Activated T-helper 1 cell treated with anti-CD3 and anti-CD28 coated beads, Interleukin-12 subunit alpha, Interleukin-12 subunit beta, Interleukin-2, Interleukin-4 antibody, amounts not matched to agents 30 ng/mL and 10 ng/mL and 1 ng/mL, durations not matched to agents 14 hours and 24 hours and 36 hours (primary cell): ENCODE measurements at regions of chrX and their contacts with region 1.

Region 1: DNA sequence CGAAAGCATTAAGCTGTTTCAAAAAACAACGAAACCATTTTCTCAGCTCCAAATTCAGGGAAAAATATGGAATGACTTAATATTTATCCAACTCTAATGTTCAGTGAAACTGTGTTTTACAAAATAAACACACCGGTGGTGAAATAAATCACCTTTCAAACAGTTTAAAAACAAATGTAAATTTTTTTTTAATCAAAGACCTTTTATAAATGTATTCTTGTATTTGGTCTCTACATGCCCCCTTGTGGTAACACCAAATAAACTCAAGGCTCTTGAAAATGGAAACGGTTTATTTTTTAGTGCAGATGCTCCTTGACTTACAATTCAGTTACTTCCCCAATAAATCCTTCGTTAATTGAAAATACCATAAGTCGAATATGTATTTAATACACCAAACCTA is 45.8 kb upstream of the ITM2A start:
- DNase-seq: no peak
- H3K4me3 Mint-ChIP-seq: peak overlapping the region; percentile 71
- H3K27ac Mint-ChIP-seq: peak overlapping the region; percentile 34
- H3K4me1 Mint-ChIP-seq: peaks cover 28% of the 10 kb centered on the region
- H3K27me3 Mint-ChIP-seq: no peaks in the 10 kb centered on the region

Region 2: DNA sequence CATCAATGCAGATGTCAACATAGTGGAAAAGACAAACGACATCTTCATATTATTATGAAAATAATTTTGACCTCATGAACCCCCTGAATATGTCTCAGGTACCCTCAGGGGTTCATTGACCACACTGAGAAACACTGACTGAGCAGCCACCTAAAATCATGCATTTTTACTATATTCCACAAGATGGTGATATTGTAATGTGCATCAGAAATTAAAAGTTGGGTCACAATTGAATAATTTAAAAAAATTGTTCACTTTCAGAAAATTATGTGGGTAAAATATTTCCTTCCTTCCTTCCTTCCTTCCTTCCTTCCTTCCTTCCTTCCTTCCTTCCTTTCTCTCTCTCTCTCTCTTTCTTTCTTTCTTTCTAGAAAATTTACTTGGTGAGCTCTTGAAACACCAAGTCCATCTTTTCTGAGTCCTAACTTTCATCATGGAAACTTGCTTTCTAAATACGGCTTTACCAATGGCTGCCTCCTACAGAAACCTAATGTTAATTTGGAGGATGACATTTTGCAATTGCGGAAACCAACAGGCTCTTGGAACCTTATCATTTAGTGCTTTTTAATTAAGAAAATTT is 857.5 kb before region 1 on chrX:
- intact Hi-C with region 1: loop called (anchors 1 kb)
- DNase-seq: no peak
- H3K4me3 Mint-ChIP-seq: no peak overlapping the region
- H3K27ac Mint-ChIP-seq: peak overlapping the region; percentile 61
- H3K4me1 Mint-ChIP-seq: peaks cover 5% of the 10 kb centered on the region
- H3K27me3 Mint-ChIP-seq: no peaks in the 10 kb centered on the region

Region 3: DNA sequence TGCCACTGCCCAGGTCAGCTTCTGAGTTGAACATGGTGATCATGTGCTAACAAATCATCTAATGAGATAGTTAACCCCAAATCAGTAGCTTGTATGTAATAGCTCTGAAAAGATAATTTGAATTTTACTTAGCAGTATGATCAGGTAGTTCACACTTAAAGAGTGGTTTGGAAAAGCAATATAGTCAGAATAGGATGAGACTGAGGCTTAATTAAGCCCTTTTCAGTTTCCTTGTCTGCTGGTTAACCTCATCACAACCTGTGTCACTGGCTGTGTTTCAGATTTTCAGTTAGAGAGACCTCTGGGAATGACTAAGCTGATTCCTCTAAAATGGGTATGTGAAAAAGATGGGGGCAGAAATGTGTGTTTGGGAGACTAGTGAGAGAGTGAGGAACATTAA is 230.4 kb before region 1 on chrX:
- intact Hi-C with region 1: loop called (anchors 5 kb)
- DNase-seq: no peak
- H3K4me3 Mint-ChIP-seq: peak overlapping the region; percentile 72
- H3K27ac Mint-ChIP-seq: peak overlapping the region; percentile 81
- H3K4me1 Mint-ChIP-seq: peaks cover 52% of the 10 kb centered on the region
- H3K27me3 Mint-ChIP-seq: no peaks in the 10 kb centered on the region

Region 4: GRCh38 chrX:79325263-79325958 is 87.6 kb before region 1 on chrX:
- intact Hi-C with region 1: loop called (anchors 5 kb)
- DNase-seq: peak; percentile 24
- H3K4me3 Mint-ChIP-seq: peak overlapping the region; percentile 73
- H3K27ac Mint-ChIP-seq: peak overlapping the region; percentile 67
- H3K4me1 Mint-ChIP-seq: peaks cover 10% of the 10 kb centered on the region
- H3K27me3 Mint-ChIP-seq: no peaks in the 10 kb centered on the region

Region 5: GRCh38 chrX:79366873-79367749 is 45.9 kb before region 1 on chrX and contains the start of gene ITM2A:
- intact Hi-C with region 1: loop called (anchors 2 kb)
- DNase-seq: peak; percentile 37
- H3K4me3 Mint-ChIP-seq: peak within 1 kb of the TSS; percentile 94
- H3K27ac Mint-ChIP-seq: peak within 1 kb of the TSS; percentile 95
- H3K4me1 Mint-ChIP-seq: peaks cover 35% of the 10 kb centered on the region
- H3K27me3 Mint-ChIP-seq: no peaks in the 10 kb centered on the region
- total RNA-seq, gene ITM2A: 114 and 116 TPM in 2 replicates

Region 6: GRCh38 chrX:79400623-79401022 is 12.3 kb before region 1 on chrX:
- intact Hi-C with region 1: no loop called
- DNase-seq: no peak
- H3K4me3 Mint-ChIP-seq: no peak overlapping the region
- H3K27ac Mint-ChIP-seq: no peak overlapping the region
- H3K4me1 Mint-ChIP-seq: peaks cover 5% of the 10 kb centered on the region
- H3K27me3 Mint-ChIP-seq: no peaks in the 10 kb centered on the region

Region 7: GRCh38 chrX:79452881-79453280 is 39.9 kb after region 1 on chrX:
- intact Hi-C with region 1: loop called (anchors 1 kb)
- DNase-seq: no peak
- H3K4me3 Mint-ChIP-seq: no peak overlapping the region
- H3K27ac Mint-ChIP-seq: no peak overlapping the region
- H3K4me1 Mint-ChIP-seq: peaks cover 8% of the 10 kb centered on the region
- H3K27me3 Mint-ChIP-seq: no peaks in the 10 kb centered on the region